Activated B cell treated with CpG ODN at 0.5 μM for 24 hours (primary cell): ENCODE measurements at regions of chr3 and their contacts with region 1.

Region 1: DNA sequence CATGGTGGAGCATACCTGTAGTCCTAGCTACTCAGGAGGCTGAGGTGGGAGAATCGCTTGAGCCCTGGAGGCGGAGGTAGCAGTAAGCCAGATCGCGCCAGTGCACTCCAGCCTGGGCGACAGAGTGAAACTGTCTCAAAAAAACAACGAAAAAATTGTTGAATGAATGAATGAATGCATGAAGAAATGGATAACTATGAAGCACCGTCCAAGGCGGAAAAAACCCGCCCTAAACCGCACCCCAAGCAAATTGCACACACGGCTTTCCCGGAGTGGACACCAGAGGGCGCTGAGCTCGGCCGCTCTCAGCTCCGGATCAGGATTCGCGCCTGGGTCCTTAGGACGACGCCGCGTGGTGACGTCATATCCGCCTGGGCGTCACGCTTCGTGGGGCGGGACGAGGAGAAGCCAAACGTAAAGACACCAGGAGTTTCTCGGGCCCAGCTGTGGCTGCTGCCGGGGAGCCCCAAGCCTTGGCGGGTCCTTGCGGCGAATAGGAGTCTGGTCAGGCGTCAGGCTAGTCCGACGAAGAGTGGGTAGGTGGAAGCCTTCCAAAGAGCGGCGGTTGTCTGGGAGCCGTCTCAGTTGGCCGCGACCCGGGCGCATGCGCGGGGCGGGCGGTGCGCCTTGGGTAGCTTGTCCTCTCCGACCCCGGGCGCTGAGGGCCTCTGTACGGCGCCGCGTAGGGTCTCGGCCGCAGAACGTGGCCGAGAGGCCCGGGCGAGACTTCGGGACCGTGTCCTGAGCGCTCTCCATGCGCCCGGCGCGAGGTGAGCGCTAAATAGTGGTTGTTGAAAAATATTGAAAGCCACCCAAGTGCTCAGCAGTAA is at the starts of genes HTD2 and RPP14:
- DNase-seq: peak; percentile 97
- ATAC-seq: peak; percentile 88
- H3K4me3 Mint-ChIP-seq: peak within 1 kb of the TSS; percentile 98
- H3K27ac Mint-ChIP-seq: peak within 1 kb of the TSS; percentile 99
- H3K4me1 Mint-ChIP-seq: peaks cover 29% of the 10 kb centered on the region
- H3K27me3 Mint-ChIP-seq: peaks cover 3% of the 10 kb centered on the region
- CTCF ChIP-seq: no peak
- total RNA-seq, gene HTD2: 11.4 TPM in 2 replicates
- total RNA-seq, gene RPP14: 17.5 and 17.7 TPM in 2 replicates

Region 2: GRCh38 chr3:57130571-57131209 is 1175.4 kb before region 1 on chr3:
- CTCF ChIA-PET with region 1: no interaction called
- POLR2A ChIA-PET with region 1: no interaction called
- intact Hi-C with region 1: no loop called
- DNase-seq: no peak
- ATAC-seq: no peak
- H3K4me3 Mint-ChIP-seq: no peak overlapping the region
- H3K27ac Mint-ChIP-seq: no peak overlapping the region
- H3K4me1 Mint-ChIP-seq: no peaks in the 10 kb centered on the region
- H3K27me3 Mint-ChIP-seq: peaks cover 14% of the 10 kb centered on the region
- CTCF ChIP-seq: no peak

Region 3: DNA sequence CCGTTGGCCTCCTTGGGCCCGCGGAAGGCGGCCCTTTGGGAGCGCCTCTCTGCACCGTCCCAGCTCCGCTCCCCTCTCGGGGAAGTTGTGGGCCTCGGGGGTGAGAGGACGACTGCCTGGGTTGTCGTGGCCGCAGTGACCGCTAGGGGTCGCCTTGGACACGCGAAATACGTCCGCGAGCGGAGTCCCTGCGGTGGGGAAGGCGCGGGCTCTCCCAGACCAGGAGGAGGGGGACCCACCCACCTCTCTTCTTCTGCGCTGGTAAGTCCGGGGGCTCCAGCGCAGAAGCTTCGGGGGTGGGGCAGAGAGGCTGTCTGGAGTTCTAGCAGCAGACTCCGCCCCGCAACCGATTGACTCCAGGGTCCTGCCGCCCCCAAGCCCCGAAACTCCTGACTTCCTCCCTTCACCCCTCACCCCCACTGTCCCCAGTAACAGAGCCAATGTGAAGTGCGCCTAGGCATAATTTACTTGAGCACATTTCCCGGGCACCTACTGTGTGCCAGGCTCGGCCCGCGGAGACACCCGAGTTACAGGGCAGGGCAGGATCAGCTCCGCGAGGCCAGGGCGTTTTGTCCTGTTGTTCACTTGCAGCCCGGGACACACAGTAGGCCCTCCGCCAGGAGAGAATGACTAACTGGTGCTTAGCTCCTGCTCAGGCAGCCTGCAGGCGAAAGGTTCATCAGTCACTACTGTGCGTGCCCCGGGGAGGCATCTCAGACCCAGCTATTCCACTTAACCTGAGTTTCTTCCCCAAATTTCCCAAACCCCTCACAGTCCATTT is 128.2 kb before region 1 on chr3:
- CTCF ChIA-PET with region 1: interaction called, 46 read pairs
- POLR2A ChIA-PET with region 1: interaction called, 10 read pairs
- intact Hi-C with region 1: no loop called
- DNase-seq: peak; percentile 91
- ATAC-seq: peak; percentile 96
- H3K4me3 Mint-ChIP-seq: peak overlapping the region; percentile 81
- H3K27ac Mint-ChIP-seq: no peak overlapping the region
- H3K4me1 Mint-ChIP-seq: peaks cover 24% of the 10 kb centered on the region
- H3K27me3 Mint-ChIP-seq: no peaks in the 10 kb centered on the region
- CTCF ChIP-seq: peak; percentile 27

Region 4: DNA sequence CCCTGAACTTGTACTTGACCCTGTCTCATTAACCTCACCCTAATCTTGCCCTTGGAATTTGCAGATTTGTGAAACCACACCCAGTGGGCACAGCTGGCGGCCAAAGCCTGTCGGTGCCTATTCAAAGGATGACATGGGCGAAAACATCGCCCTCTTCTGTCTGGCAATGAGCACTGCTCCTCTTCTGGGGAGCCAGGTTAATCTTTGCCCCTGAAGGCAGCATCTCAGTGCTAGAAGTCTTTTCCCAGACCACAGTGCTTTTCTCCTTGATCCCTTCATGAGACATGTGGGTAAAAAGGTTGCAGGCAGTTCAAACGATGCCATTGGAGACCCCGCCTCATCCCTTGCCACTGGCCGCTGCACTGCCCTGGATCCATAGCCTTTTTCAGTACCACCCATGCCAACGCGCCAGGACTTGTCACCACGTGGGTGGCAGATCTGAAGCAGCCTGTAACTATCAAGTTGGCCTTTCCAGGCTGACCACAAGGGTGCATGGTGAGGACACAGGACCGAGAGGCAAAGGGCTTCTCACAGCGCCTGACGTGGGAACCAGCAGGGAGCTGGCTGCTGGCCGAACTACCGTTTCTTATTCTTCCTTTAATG is 88.8 kb before region 1 on chr3:
- CTCF ChIA-PET with region 1: interaction called, 14 read pairs
- POLR2A ChIA-PET with region 1: interaction called, 11 read pairs
- intact Hi-C with region 1: loop called (anchors 2 kb)
- DNase-seq: peak; percentile 42
- ATAC-seq: peak; percentile 58
- H3K4me3 Mint-ChIP-seq: peak overlapping the region; percentile 74
- H3K27ac Mint-ChIP-seq: peak overlapping the region; percentile 79
- H3K4me1 Mint-ChIP-seq: peaks cover 58% of the 10 kb centered on the region
- H3K27me3 Mint-ChIP-seq: no peaks in the 10 kb centered on the region
- CTCF ChIP-seq: peak; percentile 62

Region 5: DNA sequence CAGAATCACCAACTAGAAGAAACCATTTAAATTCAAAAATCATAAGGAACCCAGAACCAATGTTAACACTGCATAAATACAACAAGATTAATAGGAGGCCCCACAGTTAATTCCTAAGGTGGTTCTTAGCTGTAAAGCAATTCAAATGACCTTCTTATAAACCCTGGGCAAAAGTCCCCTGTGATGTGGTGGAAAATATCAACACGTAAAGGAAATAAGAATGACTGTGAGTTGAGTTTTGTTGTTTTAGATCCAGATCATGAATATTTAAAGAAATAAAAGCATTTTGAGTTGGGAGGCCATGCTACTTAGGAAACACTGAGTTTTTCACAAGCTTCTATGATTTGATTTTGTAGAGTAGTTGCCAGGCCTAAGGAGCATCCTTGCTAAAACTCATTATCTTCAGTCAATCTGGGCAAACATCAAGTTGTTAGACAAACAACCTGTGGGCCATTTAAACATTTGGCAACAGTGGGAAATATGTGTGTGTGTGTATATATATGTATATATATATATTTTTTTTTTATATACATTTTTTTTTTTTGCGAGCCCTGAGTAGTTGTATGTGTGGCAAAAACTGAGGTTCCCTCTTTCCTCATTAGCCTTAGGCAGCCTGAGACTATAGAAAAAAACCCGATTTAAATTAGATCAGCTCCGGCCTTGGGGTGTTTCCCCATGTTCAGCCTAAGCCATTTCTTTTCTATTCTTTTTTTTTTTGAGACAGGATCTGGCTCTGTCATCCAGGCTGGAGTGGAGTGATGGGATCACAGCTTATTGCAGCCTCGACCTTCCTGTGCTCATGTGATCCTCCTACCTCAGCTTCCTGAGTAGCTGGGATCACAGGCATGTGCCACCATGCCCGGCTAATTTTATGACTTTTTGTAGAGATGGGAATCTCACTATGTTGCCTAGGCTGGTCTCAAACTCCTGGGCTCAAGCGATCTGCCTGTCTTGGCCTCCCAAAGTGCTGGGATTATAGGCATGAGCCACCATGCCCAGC is 18.6 kb after region 1 on chr3:
- CTCF ChIA-PET with region 1: interaction called, 8 read pairs
- POLR2A ChIA-PET with region 1: interaction called, 9 read pairs
- intact Hi-C with region 1: loop called (anchors 1 kb)
- DNase-seq: no peak
- ATAC-seq: peak; percentile 47
- H3K4me3 Mint-ChIP-seq: peak overlapping the region; percentile 48
- H3K27ac Mint-ChIP-seq: peak overlapping the region; percentile 73
- H3K4me1 Mint-ChIP-seq: peaks cover 38% of the 10 kb centered on the region
- H3K27me3 Mint-ChIP-seq: no peaks in the 10 kb centered on the region
- CTCF ChIP-seq: no peak

Region 6: DNA sequence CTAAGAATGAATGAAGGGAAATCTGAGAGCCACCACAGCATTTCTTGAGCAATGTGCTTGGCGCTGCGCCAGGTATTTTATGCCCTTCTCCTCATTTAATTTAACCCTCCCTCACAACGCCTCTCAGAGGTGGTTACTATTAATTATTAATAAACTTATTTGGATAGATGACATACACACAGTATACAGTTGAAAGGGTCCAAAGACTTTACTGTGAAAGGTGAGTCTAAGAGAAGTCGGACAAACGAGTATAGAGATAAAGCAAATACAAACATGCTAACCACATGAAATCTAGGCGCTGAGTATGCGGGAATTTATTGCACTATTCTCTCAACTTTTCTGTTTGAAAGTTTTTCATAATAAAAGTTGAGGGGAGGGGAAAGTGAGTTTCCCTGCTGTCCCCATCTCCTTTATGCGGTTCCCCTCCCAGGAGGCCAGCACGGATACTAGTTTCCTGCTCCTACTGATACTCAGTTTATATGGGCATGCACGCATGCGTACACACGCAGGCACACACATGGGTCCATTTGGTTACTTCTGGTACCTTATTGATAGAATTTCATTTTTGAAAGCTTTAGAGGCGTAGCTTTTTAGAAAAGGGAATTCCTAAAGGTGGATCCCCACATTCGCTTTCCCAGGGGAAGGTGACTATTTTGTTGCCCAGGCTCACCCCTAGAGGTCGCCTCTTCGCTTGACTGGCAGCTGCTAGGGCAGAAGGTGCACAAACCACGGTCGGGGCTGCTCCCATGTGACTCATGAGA is 157.3 kb after region 1 on chr3:
- CTCF ChIA-PET with region 1: interaction called, 3 read pairs
- POLR2A ChIA-PET with region 1: no interaction called
- intact Hi-C with region 1: loop called (anchors 1 kb)
- DNase-seq: peak; percentile 41
- ATAC-seq: peak; percentile 96
- H3K4me3 Mint-ChIP-seq: peak overlapping the region; percentile 47
- H3K27ac Mint-ChIP-seq: no peak overlapping the region
- H3K4me1 Mint-ChIP-seq: peaks cover 10% of the 10 kb centered on the region
- H3K27me3 Mint-ChIP-seq: no peaks in the 10 kb centered on the region
- CTCF ChIP-seq: peak; percentile 37

Region 7: GRCh38 chr3:58630076-58630709 is 324.1 kb after region 1 on chr3:
- CTCF ChIA-PET with region 1: interaction called, 40 read pairs
- POLR2A ChIA-PET with region 1: interaction called, 5 read pairs
- intact Hi-C with region 1: loop called (anchors 1 kb)
- DNase-seq: peak; percentile 29
- ATAC-seq: peak; percentile 76
- H3K4me3 Mint-ChIP-seq: no peak overlapping the region
- H3K27ac Mint-ChIP-seq: no peak overlapping the region
- H3K4me1 Mint-ChIP-seq: peaks cover 1% of the 10 kb centered on the region
- H3K27me3 Mint-ChIP-seq: peaks cover 5% of the 10 kb centered on the region
- CTCF ChIP-seq: peak; percentile 96